Activated naive CD4-positive, alpha-beta T cell treated with anti-CD3 and anti-CD28 coated beads for 36 hours (primary cell): ENCODE measurements at regions of chr17 and their contacts with region 1.

Region 1: GRCh38 chr17:49788478-49789242 is at the start of gene KAT7:
- DNase-seq: peak; percentile 99
- H3K4me3 Mint-ChIP-seq: peak within 1 kb of the TSS; percentile 92
- H3K27ac Mint-ChIP-seq: peak within 1 kb of the TSS; percentile 95
- H3K4me1 Mint-ChIP-seq: peaks cover 51% of the 10 kb centered on the region
- H3K27me3 Mint-ChIP-seq: no peaks in the 10 kb centered on the region
- total RNA-seq, gene KAT7: 83.9 to 85.8 TPM

Region 2: GRCh38 chr17:49360541-49361128 is 428.0 kb before region 1 on chr17:
- CTCF ChIA-PET with region 1: no interaction called
- intact Hi-C with region 1: no loop called
- DNase-seq: peak; percentile 79
- H3K4me3 Mint-ChIP-seq: peak overlapping the region; percentile 90
- H3K27ac Mint-ChIP-seq: peak overlapping the region; percentile 93
- H3K4me1 Mint-ChIP-seq: peaks cover 40% of the 10 kb centered on the region
- H3K27me3 Mint-ChIP-seq: no peaks in the 10 kb centered on the region

Region 3: GRCh38 chr17:49567871-49568694 is 220.6 kb before region 1 on chr17:
- CTCF ChIA-PET with region 1: no interaction called
- intact Hi-C with region 1: loop called (anchors 2 kb)
- DNase-seq: peak; percentile 89
- H3K4me3 Mint-ChIP-seq: peak overlapping the region; percentile 74
- H3K27ac Mint-ChIP-seq: no peak overlapping the region
- H3K4me1 Mint-ChIP-seq: peaks cover 15% of the 10 kb centered on the region
- H3K27me3 Mint-ChIP-seq: peaks cover 8% of the 10 kb centered on the region

Region 4: DNA sequence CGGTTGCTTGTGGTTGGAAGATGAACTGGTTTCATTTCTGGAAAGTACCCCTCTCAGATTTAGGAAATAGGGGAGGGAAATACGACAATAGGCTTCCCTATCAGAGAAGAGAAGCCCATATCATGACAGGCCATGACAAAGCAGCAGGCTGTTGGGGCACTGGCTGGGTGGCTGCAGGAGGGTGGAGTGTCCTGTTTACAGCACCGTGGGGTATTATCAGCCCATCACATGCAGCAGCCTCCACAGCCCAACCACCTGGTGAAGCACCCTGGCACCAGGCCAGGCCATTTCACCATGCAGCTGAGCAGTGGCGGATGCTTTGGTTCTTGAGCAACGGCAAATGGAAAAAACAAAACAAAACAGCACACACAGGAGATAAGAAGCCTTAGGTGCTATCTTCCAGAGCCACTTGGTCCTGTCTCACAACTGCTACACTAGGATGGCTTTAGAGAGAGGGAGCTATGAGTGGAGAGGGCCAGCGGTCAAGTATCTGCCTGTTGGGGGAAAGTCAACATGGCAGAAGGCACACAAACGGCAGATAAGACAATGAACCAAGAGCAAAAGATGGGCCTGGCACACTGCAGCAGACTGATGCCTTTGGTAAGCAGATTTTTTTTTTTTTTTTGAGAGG is 48.9 kb before region 1 on chr17:
- CTCF ChIA-PET with region 1: no interaction called
- intact Hi-C with region 1: loop called (anchors 1 kb)
- DNase-seq: peak; percentile 92
- H3K4me3 Mint-ChIP-seq: peak overlapping the region; percentile 84
- H3K27ac Mint-ChIP-seq: peak overlapping the region; percentile 99
- H3K4me1 Mint-ChIP-seq: peaks cover 73% of the 10 kb centered on the region
- H3K27me3 Mint-ChIP-seq: no peaks in the 10 kb centered on the region

Region 5: GRCh38 chr17:49763735-49764558 is 24.7 kb before region 1 on chr17 and contains the start of gene FAM117A:
- CTCF ChIA-PET with region 1: no interaction called
- intact Hi-C with region 1: loop called (anchors 1 kb)
- DNase-seq: peak; percentile 99
- H3K4me3 Mint-ChIP-seq: peak within 1 kb of the TSS; percentile 88
- H3K27ac Mint-ChIP-seq: peak within 1 kb of the TSS; percentile 83
- H3K4me1 Mint-ChIP-seq: peaks cover 47% of the 10 kb centered on the region
- H3K27me3 Mint-ChIP-seq: no peaks in the 10 kb centered on the region
- total RNA-seq, gene FAM117A: 17.7 TPM

Region 6: GRCh38 chr17:49952209-49952911 is 163.7 kb after region 1 on chr17:
- CTCF ChIA-PET with region 1: no interaction called
- intact Hi-C with region 1: no loop called
- DNase-seq: peak; percentile 93
- H3K4me3 Mint-ChIP-seq: no peak overlapping the region
- H3K27ac Mint-ChIP-seq: no peak overlapping the region
- H3K4me1 Mint-ChIP-seq: no peaks in the 10 kb centered on the region
- H3K27me3 Mint-ChIP-seq: peaks cover 24% of the 10 kb centered on the region

Region 7: GRCh38 chr17:50372758-50373556 is 584.3 kb after region 1 on chr17 and contains the starts of genes EME1 and MRPL27:
- CTCF ChIA-PET with region 1: no interaction called
- intact Hi-C with region 1: no loop called
- DNase-seq: peak; percentile 91
- H3K4me3 Mint-ChIP-seq: peak within 1 kb of the TSS; percentile 99
- H3K27ac Mint-ChIP-seq: peak within 1 kb of the TSS; percentile 99
- H3K4me1 Mint-ChIP-seq: peaks cover 30% of the 10 kb centered on the region
- H3K27me3 Mint-ChIP-seq: no peaks in the 10 kb centered on the region
- total RNA-seq, gene EME1: 68.9 to 69.8 TPM
- total RNA-seq, gene MRPL27: 55.1 to 58.2 TPM